Activated CD4-positive, alpha-beta memory T cell treated with anti-CD3 and anti-CD28 coated beads for 36 hours (primary cell): ENCODE measurements at regions of chr1 and their contacts with region 1.

Region 1: GRCh38 chr1:28329395-28330153 is 734 bp downstream of the MED18 start:
- DNase-seq: peak; percentile 59
- H3K4me3 Mint-ChIP-seq: peak overlapping the region; percentile 93
- H3K27ac Mint-ChIP-seq: peak overlapping the region; percentile 96
- H3K4me1 Mint-ChIP-seq: peaks cover 28% of the 10 kb centered on the region
- H3K27me3 Mint-ChIP-seq: peaks cover 1% of the 10 kb centered on the region

Region 2: DNA sequence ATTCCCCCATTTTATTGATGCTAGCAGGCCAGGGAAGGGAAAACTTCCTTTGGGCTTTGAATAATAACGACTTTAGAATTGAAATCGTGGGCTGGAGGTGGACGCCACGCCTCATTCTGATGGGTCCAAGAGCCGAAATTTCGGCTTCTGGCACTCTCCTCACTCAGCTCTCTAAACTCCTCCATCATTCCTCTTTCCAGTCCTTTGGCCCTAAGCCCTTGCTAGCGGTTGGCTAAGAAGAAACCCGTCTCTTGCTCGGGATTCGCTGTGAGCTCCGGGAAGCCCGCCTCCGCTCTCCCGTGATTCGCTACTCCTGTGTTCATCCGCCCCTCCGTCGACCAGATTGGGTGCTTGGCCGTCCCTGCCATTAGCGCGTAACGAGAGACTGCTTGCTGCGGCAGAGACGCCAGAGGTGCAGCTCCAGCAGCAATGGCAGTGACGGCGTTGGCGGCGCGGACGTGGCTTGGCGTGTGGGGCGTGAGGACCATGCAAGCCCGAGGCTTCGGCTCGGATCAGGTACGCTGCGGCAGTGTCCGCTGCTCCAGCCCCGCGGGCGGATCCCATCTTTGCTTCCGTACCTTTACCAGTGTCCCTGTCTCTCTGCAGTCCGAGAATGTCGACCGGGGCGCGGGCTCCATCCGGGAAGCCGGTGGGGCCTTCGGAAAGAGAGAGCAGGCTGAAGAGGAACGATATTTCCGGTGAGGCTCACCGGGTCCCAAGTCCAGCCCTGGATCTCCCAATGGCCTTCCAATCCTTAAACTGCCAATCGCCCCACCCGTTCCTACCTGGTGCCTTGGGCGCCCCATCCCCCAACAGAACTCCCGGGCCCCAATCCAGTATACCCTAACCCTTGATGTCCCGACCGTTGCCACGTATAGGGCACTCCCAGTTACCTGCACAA is 93.6 kb before region 1 on chr1 and contains the start of gene ATP5IF1:
- CTCF ChIA-PET with region 1: no interaction called
- POLR2A ChIA-PET with region 1: interaction called, 15 read pairs
- intact Hi-C with region 1: no loop called
- DNase-seq: peak; percentile 97
- H3K4me3 Mint-ChIP-seq: no peak within 1 kb of the TSS
- H3K27ac Mint-ChIP-seq: no peak within 1 kb of the TSS
- H3K4me1 Mint-ChIP-seq: peaks cover 19% of the 10 kb centered on the region
- H3K27me3 Mint-ChIP-seq: no peaks in the 10 kb centered on the region
- total RNA-seq, gene ATP5IF1: 174 to 181 TPM

Region 3: GRCh38 chr1:28259307-28260167 is 70.0 kb before region 1 on chr1 and contains the start of gene SESN2:
- CTCF ChIA-PET with region 1: interaction called, 3 read pairs
- POLR2A ChIA-PET with region 1: interaction called, 31 read pairs
- intact Hi-C with region 1: loop called (anchors 1 kb)
- DNase-seq: peak; percentile 100
- H3K4me3 Mint-ChIP-seq: peak within 1 kb of the TSS; percentile 74
- H3K27ac Mint-ChIP-seq: peak within 1 kb of the TSS; percentile 84
- H3K4me1 Mint-ChIP-seq: peaks cover 45% of the 10 kb centered on the region
- H3K27me3 Mint-ChIP-seq: no peaks in the 10 kb centered on the region
- total RNA-seq, gene SESN2: 23.4 to 24.1 TPM

Region 4: DNA sequence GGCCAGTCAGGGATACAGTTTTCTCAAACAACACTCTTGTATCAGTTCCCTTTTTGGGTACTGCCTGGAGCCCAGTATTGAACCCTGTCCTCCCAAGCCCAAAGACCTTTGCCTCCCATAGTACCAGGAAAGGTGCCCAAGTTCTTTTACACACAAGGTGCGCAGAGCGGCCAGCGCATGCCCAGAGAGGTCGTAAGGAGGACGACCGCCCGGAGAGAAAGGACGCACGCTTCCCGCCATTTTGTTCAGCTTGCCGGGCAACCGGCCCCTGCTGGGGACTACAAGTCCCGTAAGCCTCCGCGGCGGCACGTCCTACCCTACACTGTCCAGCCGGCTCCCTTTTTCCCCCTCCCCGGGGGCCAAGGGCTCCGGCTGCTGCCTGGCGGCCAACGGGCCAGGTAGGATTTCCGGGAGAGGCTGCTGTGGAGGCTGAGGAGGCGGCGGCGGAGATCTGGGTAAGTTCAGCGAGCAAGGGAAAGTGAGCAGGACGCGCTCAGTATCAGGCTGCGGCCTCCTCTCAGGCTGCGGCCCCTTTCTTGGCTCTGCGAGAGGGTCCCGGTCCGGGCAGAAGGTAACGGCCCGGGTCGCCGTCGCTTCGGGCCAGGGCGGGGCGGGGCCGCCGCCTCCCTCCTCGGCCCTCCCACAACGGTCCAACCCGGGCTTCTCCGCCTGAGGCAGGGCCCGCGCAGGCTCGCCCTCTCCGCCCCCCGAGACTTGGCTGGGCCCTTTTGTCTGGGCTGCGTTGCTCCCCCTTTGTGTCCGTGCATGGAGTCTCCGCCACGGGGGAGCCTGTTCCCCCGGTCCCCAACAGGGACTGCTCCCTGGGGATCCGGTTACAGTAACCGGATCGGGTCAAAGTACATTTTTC is 40.0 kb after region 1 on chr1 and contains the start of gene PHACTR4:
- CTCF ChIA-PET with region 1: no interaction called
- POLR2A ChIA-PET with region 1: interaction called, 4 read pairs
- intact Hi-C with region 1: loop called (anchors 2 kb)
- DNase-seq: peak; percentile 90
- H3K4me3 Mint-ChIP-seq: peak within 1 kb of the TSS; percentile 94
- H3K27ac Mint-ChIP-seq: peak within 1 kb of the TSS; percentile 86
- H3K4me1 Mint-ChIP-seq: peaks cover 25% of the 10 kb centered on the region
- H3K27me3 Mint-ChIP-seq: no peaks in the 10 kb centered on the region
- total RNA-seq, gene PHACTR4: 19.5 to 21.5 TPM

Region 5: GRCh38 chr1:28540651-28541050 is 211.1 kb after region 1 on chr1:
- CTCF ChIA-PET with region 1: no interaction called
- POLR2A ChIA-PET with region 1: no interaction called
- intact Hi-C with region 1: no loop called
- DNase-seq: no peak
- H3K4me3 Mint-ChIP-seq: no peak overlapping the region
- H3K27ac Mint-ChIP-seq: no peak overlapping the region
- H3K4me1 Mint-ChIP-seq: no peaks in the 10 kb centered on the region
- H3K27me3 Mint-ChIP-seq: no peaks in the 10 kb centered on the region

Region 6: GRCh38 chr1:28552758-28553663 is 223.4 kb after region 1 on chr1 and contains the start of gene TRNAU1AP:
- CTCF ChIA-PET with region 1: no interaction called
- POLR2A ChIA-PET with region 1: no interaction called
- intact Hi-C with region 1: loop called (anchors 2 kb)
- DNase-seq: peak; percentile 99
- H3K4me3 Mint-ChIP-seq: peak within 1 kb of the TSS; percentile 98
- H3K27ac Mint-ChIP-seq: peak within 1 kb of the TSS; percentile 96
- H3K4me1 Mint-ChIP-seq: peaks cover 17% of the 10 kb centered on the region
- H3K27me3 Mint-ChIP-seq: no peaks in the 10 kb centered on the region
- total RNA-seq, gene TRNAU1AP: 57.3 to 59.6 TPM